Head of caudate nucleus (tissue), 42 donors: ENCODE measurements at regions of chr14 and their contacts with region 1.

Region 1: DNA sequence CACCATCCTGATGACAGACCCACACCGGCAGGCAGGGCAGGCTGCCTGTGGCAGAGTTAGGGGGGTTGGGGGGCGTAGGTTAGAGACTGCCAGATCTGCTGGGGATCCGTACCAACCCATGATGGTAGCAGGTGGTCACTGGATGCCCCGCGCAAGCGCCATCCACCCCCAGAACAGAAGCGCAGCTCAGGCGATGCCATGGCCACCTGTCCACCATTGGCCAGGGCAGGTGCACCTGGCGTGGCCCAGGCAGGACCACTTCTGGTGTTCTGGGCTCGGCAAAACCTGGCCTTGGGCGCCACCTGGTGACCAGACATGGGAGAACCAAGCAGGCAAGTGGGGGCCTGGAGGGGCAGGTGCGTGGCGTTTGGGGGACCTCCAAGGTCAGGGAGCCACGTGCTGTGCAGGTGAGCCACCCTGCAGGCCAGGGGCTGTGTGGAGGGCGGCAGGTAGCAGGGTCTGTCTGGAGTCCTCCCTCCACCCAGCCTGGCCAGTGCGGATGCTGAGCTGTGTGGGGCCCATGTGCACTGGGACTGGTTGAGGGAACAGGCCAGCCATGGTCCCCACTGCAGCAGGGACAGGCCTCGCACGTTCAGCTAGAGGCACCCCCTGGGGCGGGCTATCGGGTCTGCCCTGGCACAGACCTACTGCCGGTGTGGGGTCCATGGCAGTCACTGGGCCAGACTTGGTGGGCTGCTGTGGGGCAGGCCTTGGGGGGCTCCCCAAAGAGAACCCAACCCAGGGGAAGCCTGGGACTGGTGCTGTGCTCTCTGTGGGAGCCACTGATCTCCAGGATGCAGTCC is 15.6 kb downstream of the BAG5 start:
- DNase-seq: peak; percentile 74 to 94 (median 86)

Region 2: GRCh38 chr14:103499706-103500105 is 47.1 kb before region 1 on chr14:
- intact Hi-C with region 1: loop called (anchors 10 kb)
- DNase-seq: peak in 2 of 42 donors; percentile 23 to 34

Region 3: DNA sequence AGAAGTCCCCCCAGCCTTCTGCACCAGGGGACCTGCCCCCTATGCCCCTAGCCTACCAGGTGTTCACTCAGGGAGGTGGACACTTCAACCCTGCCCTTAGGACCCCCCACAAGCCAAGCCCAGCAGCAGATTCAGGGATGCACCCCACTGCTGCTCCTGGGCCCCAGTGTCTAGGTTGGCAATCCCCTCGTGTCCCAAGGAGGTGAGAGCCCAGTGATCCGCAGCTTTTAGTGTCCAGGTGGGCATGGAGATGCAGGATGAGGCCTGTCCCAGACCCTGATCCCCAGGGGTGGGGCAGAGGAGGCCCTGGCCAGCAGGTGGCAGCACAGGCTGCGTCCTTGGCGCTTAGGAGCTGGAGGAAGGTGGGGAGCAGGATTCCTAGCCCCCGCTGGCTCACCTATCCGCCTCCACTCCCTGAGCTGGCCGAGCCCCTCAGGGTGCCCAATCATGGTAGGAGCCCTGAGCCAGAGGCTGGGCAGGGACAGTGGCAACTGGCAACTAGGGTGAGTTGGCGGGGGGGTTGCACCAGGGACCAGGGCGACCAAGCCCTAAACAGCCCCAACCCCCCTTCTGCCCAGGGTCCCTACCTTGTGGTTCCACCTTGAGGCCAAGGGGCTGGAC is 28.3 kb before region 1 on chr14:
- intact Hi-C with region 1: loop called (anchors 2 kb)
- DNase-seq: peak in 41 of 42 donors; percentile 67 to 91 (median 82)